Right ventricle myocardium inferior (tissue), 1 donor: ENCODE measurements at regions of chr7 and their contacts with region 1.

Region 1: DNA sequence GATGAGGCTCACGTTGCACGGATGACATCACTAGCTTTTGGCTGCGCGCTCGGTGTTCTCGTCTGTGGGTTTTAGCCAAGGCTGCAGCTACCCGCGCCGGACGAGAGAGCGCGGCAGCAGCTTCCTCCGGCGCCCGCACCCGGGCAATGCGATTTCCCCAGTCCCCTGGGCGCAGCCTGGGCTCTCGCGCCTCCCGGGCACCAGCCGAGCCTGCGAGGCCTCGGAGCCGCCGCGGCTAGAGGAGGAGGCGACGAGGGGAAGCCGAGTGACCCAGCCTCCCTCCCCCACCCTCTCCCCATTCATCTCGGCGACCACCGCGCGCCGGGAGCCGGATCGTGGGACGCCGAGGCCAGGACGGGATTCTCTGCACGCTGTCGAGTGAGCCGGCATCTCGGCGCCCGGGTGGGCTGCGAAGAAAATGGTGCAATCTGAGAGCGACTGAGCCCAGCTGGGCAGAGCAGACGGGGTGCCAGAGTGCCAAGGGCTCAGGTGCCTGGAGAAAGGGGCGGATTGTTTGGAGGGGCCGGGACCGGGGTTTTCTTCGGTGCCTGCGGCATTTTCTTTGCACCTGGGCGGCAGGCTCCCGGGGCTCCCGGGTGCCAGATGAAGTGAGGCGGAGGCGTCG is 1.2 kb upstream of the TMEM178B start:
- DNase-seq: peak; percentile 73
- ATAC-seq: peak; percentile 67

Region 2: GRCh38 chr7:141366091-141366621 is 293.5 kb after region 1 on chr7:
- intact Hi-C with region 1: loop called (anchors 10 kb)
- DNase-seq: no peak
- ATAC-seq: peak; percentile 76